Activated CD8-positive, alpha-beta T cell treated with anti-CD3 and anti-CD28 coated beads, Interleukin-2, amount 10 ng/mL, durations not matched to agents 7 days and 5 days (primary cell): ENCODE measurements at regions of chr3 and their contacts with region 1.

Region 1: DNA sequence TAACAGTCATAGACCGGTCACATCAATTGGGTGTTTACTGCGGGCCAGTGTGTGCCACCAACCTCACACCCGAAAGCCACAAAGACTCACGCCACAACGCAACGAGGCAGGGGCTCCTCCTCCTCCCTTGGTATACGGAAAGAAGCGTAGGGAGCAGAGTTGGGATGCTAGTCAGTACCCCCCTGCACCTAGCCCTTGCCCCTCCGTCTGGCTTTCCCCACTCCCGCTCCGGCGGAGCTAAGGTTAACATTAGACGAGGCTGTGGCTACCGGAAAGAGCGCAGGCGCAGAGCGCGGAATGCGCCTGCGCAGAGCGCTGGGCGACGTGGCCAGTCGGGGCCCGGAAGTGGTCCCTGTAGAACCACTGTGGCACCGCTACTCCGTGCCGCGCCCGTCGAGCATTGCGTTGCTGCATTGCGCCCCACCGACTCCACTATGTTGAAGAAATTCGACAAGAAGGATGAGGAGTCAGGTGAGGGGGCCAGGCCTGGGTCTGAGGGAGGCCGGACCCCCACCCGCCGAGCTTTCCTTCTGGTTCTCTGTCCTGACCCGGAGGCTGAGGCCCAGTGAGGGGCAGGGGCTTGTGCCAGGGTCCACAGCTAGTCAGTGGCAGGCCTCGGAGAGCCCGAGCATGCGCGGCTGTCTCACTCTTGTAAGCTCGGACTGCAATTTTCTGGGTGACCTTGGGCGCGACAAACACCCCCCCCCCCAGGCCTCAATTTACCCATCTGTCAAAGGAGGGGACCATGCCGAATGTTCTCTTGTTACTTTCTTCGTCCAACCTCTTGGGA is at the start of gene COPG1:
- DNase-seq: peak; percentile 90
- ATAC-seq: peak; percentile 87
- H3K4me3 Mint-ChIP-seq: peak within 1 kb of the TSS; percentile 88
- H3K27ac Mint-ChIP-seq: peak within 1 kb of the TSS; percentile 94
- H3K4me1 Mint-ChIP-seq: peaks cover 43% of the 10 kb centered on the region
- H3K27me3 Mint-ChIP-seq: no peaks in the 10 kb centered on the region
- total RNA-seq, gene COPG1: 135 to 140 TPM

Region 2: GRCh38 chr3:129016356-129016719 is 233.1 kb before region 1 on chr3:
- CTCF ChIA-PET with region 1: interaction called, 25 read pairs
- POLR2A ChIA-PET with region 1: interaction called, 8 read pairs
- DNase-seq: peak; percentile 81
- ATAC-seq: peak; percentile 88
- H3K4me3 Mint-ChIP-seq: peak overlapping the region; percentile 66
- H3K27ac Mint-ChIP-seq: peak overlapping the region; percentile 91
- H3K4me1 Mint-ChIP-seq: peaks cover 37% of the 10 kb centered on the region
- H3K27me3 Mint-ChIP-seq: no peaks in the 10 kb centered on the region

Region 3: GRCh38 chr3:129120254-129121004 is 129.0 kb before region 1 on chr3:
- CTCF ChIA-PET with region 1: interaction called, 42 read pairs
- POLR2A ChIA-PET with region 1: interaction called, 11 read pairs
- DNase-seq: peak; percentile 98
- ATAC-seq: peak; percentile 69
- H3K4me3 Mint-ChIP-seq: peak overlapping the region; percentile 84
- H3K27ac Mint-ChIP-seq: peak overlapping the region; percentile 91
- H3K4me1 Mint-ChIP-seq: peaks cover 56% of the 10 kb centered on the region
- H3K27me3 Mint-ChIP-seq: no peaks in the 10 kb centered on the region

Region 4: GRCh38 chr3:129160891-129161859 is 88.3 kb before region 1 on chr3 and contains the start of gene ISY1:
- CTCF ChIA-PET with region 1: interaction called, 71 read pairs
- POLR2A ChIA-PET with region 1: interaction called, 14 read pairs
- DNase-seq: peak; percentile 93
- ATAC-seq: peak; percentile 84
- H3K4me3 Mint-ChIP-seq: peak within 1 kb of the TSS; percentile 91
- H3K27ac Mint-ChIP-seq: peak within 1 kb of the TSS; percentile 99
- H3K4me1 Mint-ChIP-seq: peaks cover 36% of the 10 kb centered on the region
- H3K27me3 Mint-ChIP-seq: no peaks in the 10 kb centered on the region
- total RNA-seq, gene ISY1: 57.9 to 65.7 TPM

Region 5: DNA sequence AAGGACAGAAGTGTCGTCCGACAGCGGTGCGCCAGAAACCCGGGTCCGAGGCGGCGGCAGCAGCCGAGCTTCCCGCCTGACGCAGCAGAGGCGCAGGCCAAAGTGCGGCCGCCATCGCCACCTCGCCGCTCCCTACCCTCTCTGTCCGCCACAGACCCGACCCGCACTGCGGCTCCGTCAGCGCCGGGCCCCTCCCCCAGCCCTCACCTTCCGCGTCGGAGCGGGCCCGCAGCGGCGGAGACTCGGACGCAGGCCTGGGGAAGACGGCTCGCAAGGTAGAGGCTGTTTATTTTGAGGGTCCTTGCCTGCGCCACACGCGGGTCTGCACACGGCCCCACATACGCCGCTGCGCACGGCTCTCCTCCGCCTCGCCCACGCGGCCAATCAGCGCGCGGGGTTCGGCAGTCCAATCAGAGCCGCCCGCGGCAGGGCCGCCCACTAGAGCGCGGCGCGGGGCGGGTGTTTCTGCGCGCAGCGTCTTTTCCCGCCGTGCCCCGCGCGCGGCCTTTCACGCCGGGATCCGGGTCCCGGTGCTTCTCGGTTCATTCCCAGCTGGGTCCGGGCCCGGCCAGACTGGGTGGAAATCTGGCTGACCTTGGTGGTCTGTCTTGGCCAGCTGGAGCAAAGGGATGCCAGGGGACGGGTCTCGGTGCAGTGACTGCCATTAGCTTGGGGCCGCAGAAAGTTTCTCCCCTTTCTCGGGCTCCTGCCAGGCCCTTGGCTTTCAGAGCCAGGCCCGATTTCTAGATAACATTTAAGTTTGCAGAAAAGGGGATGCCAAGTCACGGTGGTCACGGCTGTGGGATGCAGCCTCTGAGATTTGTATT is 65.7 kb before region 1 on chr3 and contains the start of gene CNBP:
- CTCF ChIA-PET with region 1: interaction called, 31 read pairs
- POLR2A ChIA-PET with region 1: interaction called, 15 read pairs
- DNase-seq: peak; percentile 94
- ATAC-seq: peak; percentile 98
- H3K4me3 Mint-ChIP-seq: peak within 1 kb of the TSS; percentile 92
- H3K27ac Mint-ChIP-seq: peak within 1 kb of the TSS; percentile 98
- H3K4me1 Mint-ChIP-seq: peaks cover 45% of the 10 kb centered on the region
- H3K27me3 Mint-ChIP-seq: no peaks in the 10 kb centered on the region
- total RNA-seq, gene CNBP: 263 to 273 TPM

Region 6: DNA sequence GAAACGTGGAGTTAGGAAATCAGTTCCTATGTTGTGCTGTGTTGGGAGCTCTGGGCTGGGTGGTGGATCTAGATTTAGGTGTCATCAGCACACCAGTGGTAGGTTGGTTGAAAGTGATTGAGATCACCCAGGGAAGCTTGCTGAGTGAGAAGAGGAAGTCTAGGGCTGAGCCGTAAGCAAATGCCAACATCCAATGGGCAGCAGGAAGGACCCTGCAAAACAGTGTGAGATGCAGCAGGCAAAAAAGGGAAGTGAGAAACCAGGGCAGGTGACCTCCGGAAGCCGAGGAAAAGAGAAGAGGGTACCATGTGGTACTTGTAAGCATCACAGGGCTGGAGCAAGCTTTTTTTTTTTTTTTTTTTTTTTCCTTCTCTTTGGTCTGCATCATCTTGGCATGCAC is 15.9 kb before region 1 on chr3:
- CTCF ChIA-PET with region 1: interaction called, 10 read pairs
- POLR2A ChIA-PET with region 1: interaction called, 19 read pairs
- DNase-seq: peak; percentile 31
- ATAC-seq: peak; percentile 38
- H3K4me3 Mint-ChIP-seq: peak overlapping the region; percentile 6
- H3K27ac Mint-ChIP-seq: peak overlapping the region; percentile 89
- H3K4me1 Mint-ChIP-seq: peaks cover 75% of the 10 kb centered on the region
- H3K27me3 Mint-ChIP-seq: no peaks in the 10 kb centered on the region